Naive thymus-derived CD4-positive, alpha-beta T cell (primary cell): ENCODE measurements at regions of chr12 and their contacts with region 1.

Region 1: DNA sequence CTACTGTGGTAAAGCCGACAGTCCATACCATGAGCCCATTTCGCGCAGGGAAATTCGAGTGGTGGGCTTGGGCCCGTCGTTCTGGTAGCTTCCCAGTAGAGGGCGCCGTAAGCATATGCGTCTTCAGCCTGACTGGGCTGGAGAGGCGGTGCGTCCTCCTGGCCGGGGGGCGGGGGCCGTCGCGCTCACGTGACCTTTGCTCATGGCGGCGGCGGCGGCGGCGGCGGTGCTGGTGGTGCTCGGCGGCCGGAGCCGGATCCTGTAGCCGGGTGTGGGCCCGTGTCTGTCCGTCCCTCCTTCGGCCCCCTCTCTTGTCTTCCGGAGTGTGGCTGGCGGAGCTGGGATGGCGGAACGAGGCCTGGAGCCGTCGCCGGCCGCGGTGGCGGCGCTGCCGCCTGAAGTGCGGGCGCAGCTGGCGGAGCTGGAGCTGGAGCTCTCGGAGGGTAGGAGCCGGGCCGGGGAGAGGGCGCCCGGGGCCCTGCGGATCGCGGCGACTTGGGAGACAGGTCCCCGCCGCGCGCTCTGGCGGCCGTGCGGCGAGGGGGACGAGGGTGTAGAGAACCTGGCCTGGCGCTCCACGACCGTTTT is at the start of gene DIP2B:
- DNase-seq: peak; percentile 90 to 96 (median 94)
- ATAC-seq: peak; percentile 99
- H3K4me3 ChIP-seq: peak within 1 kb of the TSS; percentile 83
- H3K4me3 Mint-ChIP-seq: peak within 1 kb of the TSS; percentile 93 to 99 (median 98)
- H3K27ac ChIP-seq: peak within 1 kb of the TSS; percentile 93
- H3K27ac Mint-ChIP-seq: peak within 1 kb of the TSS; percentile 90 to 97 (median 94)
- H3K4me1 ChIP-seq: peaks cover 33 to 40% of the 10 kb centered on the region in 2 donors
- H3K4me1 Mint-ChIP-seq: peaks cover 36 to 49% (median 43%) of the 10 kb centered on the region in 7 donors
- H3K27me3 ChIP-seq: no peaks in the 10 kb centered on the region
- H3K27me3 Mint-ChIP-seq: no peaks in the 10 kb centered on the region
- total RNA-seq, gene DIP2B: 34.1 to 41.8 (median 39.9) TPM

Region 2: DNA sequence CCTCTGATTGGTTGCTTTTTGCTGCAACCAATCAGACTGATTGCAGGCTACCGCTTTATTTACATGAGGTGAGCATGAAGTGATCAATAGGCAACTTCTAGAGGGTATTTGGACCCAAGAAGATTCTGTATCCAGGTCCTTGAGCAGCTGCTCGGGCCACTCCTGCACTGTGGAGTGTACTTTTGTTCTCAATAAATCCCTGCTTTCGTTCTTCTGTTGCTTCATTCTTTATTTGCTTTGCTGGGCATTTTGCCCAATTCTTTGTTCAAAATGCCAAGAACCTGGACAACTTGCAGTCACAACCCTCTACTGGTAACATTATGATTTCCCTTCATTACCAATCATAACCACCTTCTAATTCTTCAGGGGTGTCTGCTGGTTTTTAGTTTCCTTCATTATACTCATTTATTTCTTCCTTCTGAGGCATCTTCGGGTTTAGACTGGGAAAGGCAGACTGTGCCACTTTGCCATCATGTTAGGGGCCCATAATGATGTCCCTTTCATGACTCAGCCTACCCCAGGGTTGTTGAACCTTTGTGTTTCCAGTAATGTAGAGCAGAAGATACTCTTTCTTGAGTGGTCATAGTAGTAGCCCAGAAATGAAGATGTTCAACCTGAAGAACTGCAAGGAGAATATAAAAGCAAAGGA is 178.1 kb before region 1 on chr12:
- CTCF ChIA-PET with region 1: no interaction called
- POLR2A ChIA-PET with region 1: no interaction called
- intact Hi-C with region 1: no loop called
- DNase-seq: no peak
- ATAC-seq: no peak
- H3K4me3 ChIP-seq: no peak overlapping the region
- H3K4me3 Mint-ChIP-seq: no peak overlapping the region
- H3K27ac ChIP-seq: no peak overlapping the region
- H3K27ac Mint-ChIP-seq: no peak overlapping the region
- H3K4me1 ChIP-seq: no peaks in the 10 kb centered on the region
- H3K4me1 Mint-ChIP-seq: peaks cover 0 to 4% (median 0%) of the 10 kb centered on the region in 7 donors
- H3K27me3 ChIP-seq: no peaks in the 10 kb centered on the region
- H3K27me3 Mint-ChIP-seq: no peaks in the 10 kb centered on the region

Region 3: DNA sequence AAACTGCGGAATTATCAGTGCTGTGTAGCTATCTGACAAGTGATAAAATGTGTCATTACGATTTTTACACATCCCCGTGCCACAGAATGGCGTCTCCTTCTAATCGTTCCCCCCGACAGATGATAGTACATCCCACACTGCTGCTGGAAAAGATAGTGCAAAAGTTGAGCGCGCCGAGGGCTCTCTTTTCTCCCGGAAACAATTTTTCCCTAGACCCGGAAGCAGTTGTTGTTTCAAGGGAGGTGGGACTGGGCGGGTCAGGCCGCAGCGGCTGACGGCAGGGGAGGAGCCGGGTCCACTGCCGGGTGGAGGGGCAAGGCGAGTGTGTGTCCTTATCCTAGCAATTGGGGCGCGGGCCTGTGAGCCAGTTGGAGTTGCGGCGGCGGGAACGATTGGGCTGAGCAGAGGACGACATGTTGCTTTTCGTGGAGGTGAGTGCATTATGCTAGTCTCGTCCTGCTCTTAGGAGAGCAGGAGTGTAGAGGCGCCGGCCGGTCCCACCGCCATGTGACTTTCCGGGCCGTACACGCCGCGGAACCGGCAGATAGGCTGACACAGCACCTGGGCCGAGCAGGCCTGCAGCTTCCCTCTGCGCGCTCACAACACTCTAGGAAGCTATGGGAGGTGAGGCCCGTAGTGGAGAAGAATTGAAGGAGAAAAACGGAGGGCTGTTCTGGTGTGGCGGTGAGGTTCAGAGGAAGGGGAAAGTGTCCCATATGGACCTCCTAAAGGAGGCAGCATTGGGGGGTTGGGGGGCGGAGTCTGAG is 104.1 kb before region 1 on chr12 and contains the start of gene LARP4:
- CTCF ChIA-PET with region 1: no interaction called
- POLR2A ChIA-PET with region 1: no interaction called
- intact Hi-C with region 1: loop called in 1 of 2 experiments (anchors 5 kb)
- DNase-seq: peak; percentile 70 to 92 (median 88)
- ATAC-seq: peak; percentile 98
- H3K4me3 ChIP-seq: peak within 1 kb of the TSS; percentile 66
- H3K4me3 Mint-ChIP-seq: peak within 1 kb of the TSS; percentile 81 to 100 (median 99)
- H3K27ac ChIP-seq: peak within 1 kb of the TSS; percentile 77
- H3K27ac Mint-ChIP-seq: peak within 1 kb of the TSS; percentile 86 to 97 (median 95)
- H3K4me1 ChIP-seq: peaks cover 9 to 12% of the 10 kb centered on the region in 2 donors
- H3K4me1 Mint-ChIP-seq: peaks cover 23 to 55% (median 37%) of the 10 kb centered on the region in 7 donors
- H3K27me3 ChIP-seq: no peaks in the 10 kb centered on the region
- H3K27me3 Mint-ChIP-seq: peaks cover 0 to 13% (median 6%) of the 10 kb centered on the region in 5 donors
- total RNA-seq, gene LARP4: 22.1 to 68.9 (median 38.4) TPM

Region 4: DNA sequence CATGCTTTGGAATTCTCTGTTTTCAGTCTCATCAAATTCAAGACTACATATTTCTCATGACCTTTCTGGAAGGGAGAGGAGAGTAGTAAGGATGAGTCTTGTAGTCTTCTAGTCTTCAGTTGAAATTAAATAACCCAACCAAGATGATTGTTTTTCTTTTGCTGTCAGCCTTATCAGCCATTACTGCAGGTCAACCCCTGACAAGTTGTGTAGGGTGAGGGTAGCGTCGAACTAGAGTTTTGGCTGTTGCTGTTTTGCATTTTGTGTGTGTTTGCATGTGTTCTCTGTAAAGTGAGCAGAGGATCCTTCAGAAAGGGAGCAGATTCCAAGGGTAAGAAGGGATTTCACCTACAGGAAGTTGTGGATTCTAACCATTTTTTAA is 28.3 kb after region 1 on chr12:
- CTCF ChIA-PET with region 1: interaction called, 4 read pairs
- POLR2A ChIA-PET with region 1: interaction called, 11 read pairs
- intact Hi-C with region 1: loop called (anchors 1 kb)
- DNase-seq: no peak
- ATAC-seq: peak; percentile 6
- H3K4me3 ChIP-seq: no peak overlapping the region
- H3K4me3 Mint-ChIP-seq: no peak overlapping the region
- H3K27ac ChIP-seq: peak overlapping the region; percentile 50
- H3K27ac Mint-ChIP-seq: no peak overlapping the region
- H3K4me1 ChIP-seq: peaks cover 11 to 46% of the 10 kb centered on the region in 2 donors
- H3K4me1 Mint-ChIP-seq: peaks cover 23 to 39% (median 34%) of the 10 kb centered on the region in 7 donors
- H3K27me3 ChIP-seq: no peaks in the 10 kb centered on the region
- H3K27me3 Mint-ChIP-seq: no peaks in the 10 kb centered on the region

Region 5: DNA sequence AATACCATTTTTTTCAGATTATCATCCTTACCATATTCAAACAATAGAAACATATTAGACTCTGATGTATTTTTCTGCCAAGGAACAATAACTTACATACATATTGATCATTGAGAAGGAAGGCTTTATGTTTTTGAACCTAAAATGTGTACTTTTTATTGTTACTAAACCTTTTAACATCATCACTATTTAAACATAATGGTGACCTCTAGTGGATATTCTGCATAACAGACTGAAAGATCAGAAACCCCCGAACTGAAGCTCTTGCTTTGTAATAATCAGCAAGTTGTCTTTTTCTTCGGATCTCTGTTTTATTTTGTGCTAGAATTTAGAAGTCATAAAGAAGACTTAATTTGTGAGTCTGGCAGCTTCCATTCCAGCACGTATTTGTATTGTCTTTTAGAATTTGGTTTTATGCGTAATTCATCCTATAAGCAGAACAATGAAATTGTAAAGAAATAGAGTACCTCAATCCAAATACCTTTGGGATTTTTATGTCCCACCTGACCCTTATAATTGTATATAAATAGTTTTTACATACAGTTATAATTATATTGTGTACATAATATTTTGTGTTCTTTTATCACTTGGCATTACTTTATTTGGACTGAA is 133.1 kb after region 1 on chr12:
- CTCF ChIA-PET with region 1: interaction called, 60 read pairs
- POLR2A ChIA-PET with region 1: interaction called, 13 read pairs
- intact Hi-C with region 1: loop called (anchors 1 kb)
- DNase-seq: peak in 7 of 9 donors; percentile 39 to 70 (median 53)
- ATAC-seq: peak; percentile 79
- H3K4me3 ChIP-seq: no peak overlapping the region
- H3K4me3 Mint-ChIP-seq: peak overlapping the region in 1 of 10 donors; percentile 2
- H3K27ac ChIP-seq: no peak overlapping the region
- H3K27ac Mint-ChIP-seq: peak overlapping the region in 8 of 9 donors; percentile 13 to 86 (median 55)
- H3K4me1 ChIP-seq: peaks cover 0 to 16% of the 10 kb centered on the region in 2 donors
- H3K4me1 Mint-ChIP-seq: peaks cover 34 to 72% (median 65%) of the 10 kb centered on the region in 7 donors
- H3K27me3 ChIP-seq: no peaks in the 10 kb centered on the region
- H3K27me3 Mint-ChIP-seq: no peaks in the 10 kb centered on the region

Region 6: GRCh38 chr12:50986966-50987737 is 482.3 kb after region 1 on chr12:
- CTCF ChIA-PET with region 1: no interaction called
- POLR2A ChIA-PET with region 1: no interaction called
- intact Hi-C with region 1: loop called in 1 of 2 experiments (anchors 10 kb)
- DNase-seq: peak in 7 of 9 donors; percentile 14 to 56 (median 37)
- ATAC-seq: peak; percentile 53
- H3K4me3 ChIP-seq: no peak overlapping the region
- H3K4me3 Mint-ChIP-seq: no peak overlapping the region
- H3K27ac ChIP-seq: peak overlapping the region; percentile 4
- H3K27ac Mint-ChIP-seq: peak overlapping the region in 7 of 9 donors; percentile 6 to 87 (median 65)
- H3K4me1 ChIP-seq: no peaks in the 10 kb centered on the region
- H3K4me1 Mint-ChIP-seq: peaks cover 0 to 21% (median 9%) of the 10 kb centered on the region in 7 donors
- H3K27me3 ChIP-seq: no peaks in the 10 kb centered on the region
- H3K27me3 Mint-ChIP-seq: no peaks in the 10 kb centered on the region